ENCODE measurements at regions of chr11 and their contacts with region 1.

Region 1: GRCh38 chr11:113884361-113884836 is 9.0 kb upstream of the USP28 start:
- DNase-seq: no peak
- H3K4me3 ChIP-seq: no peak overlapping the region
- H3K27me3 ChIP-seq: no peaks in the 10 kb centered on the region
- CTCF ChIP-seq: no peak

Region 2: GRCh38 chr11:113896156-113896879 is 11.9 kb after region 1 on chr11:
- CTCF ChIA-PET with region 1: interaction called, 23 read pairs
- POLR2A ChIA-PET with region 1: interaction called, 7 read pairs
- DNase-seq: no peak
- H3K4me3 ChIP-seq: no peak overlapping the region
- H3K27me3 ChIP-seq: peaks cover 4% of the 10 kb centered on the region
- CTCF ChIP-seq: peak; percentile 80